ENCODE measurements at regions of chr10 and their contacts with region 1.

Region 1: DNA sequence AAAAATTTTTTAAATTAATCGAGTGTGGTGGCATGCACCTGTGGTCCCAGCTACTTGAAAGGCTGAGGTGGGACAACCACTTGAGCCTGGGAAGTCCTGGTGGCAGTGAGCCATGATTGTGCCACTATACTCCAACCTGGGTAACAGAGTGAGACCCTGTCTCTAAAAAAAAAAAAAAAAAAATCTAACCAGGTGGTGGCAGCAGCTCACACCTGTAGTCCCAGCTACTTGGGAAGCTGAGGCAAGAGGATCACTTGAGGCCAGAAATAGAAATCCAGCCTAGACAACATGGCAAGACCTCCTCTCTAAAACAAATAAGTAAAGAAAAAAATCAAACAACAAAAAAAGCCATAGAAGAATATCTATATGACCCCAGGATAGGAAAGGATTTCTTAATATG is 3.6 kb upstream of the MYOF start:
- DNase-seq: no peak
- H3K4me3 ChIP-seq: no peak overlapping the region
- H3K27ac ChIP-seq: no peak overlapping the region
- H3K4me1 ChIP-seq: peaks cover 11% of the 10 kb centered on the region in 2 donors
- H3K27me3 ChIP-seq: no peaks in the 10 kb centered on the region
- CTCF ChIP-seq: peak in 1 of 6 experiments; percentile 22
- POLR2A ChIP-seq: no peak

Region 2: DNA sequence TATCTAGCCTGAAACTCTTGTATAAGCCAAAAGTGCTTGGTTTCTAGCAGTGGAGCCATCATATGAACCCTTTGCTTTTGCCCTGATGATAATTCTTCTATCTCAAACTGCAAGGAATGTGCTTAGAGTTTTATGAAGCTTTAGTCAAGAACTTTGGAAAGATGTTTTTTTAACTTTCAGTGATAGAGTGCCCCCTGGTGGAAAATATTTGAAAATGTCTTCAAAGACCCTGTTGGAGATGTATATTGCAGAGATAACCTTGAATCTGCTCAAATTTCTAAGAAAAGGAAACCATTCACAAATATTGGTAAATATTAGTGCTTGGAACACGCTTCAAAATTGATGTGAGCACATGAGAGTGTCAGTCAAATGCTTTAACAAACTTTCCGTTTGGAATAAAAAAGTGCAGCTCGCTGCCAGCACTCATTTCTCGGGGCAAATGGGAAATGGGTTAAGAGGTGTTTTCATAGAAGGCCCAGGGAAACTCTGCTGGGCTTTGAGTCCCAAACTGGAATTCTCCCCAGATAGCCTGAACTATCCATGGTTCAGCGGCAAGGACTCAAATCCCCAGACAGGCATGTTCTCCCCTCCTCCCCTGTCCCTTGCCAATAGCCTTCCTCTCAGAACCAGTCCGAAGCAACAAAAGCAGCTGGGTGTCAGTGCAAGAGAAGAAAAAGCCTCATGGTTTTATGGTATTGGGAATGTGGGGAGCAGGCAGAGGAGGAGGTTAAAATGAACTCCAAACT is 132.9 kb before region 1 on chr10:
- intact Hi-C with region 1: no loop called
- DNase-seq: peak in 1 of 2 donors; percentile 12
- H3K4me3 ChIP-seq: no peak overlapping the region
- H3K27ac ChIP-seq: no peak overlapping the region
- H3K4me1 ChIP-seq: no peaks in the 10 kb centered on the region
- H3K27me3 ChIP-seq: no peaks in the 10 kb centered on the region
- CTCF ChIP-seq: peak; percentile 40 to 81 (median 62)
- POLR2A ChIP-seq: no peak

Region 3: DNA sequence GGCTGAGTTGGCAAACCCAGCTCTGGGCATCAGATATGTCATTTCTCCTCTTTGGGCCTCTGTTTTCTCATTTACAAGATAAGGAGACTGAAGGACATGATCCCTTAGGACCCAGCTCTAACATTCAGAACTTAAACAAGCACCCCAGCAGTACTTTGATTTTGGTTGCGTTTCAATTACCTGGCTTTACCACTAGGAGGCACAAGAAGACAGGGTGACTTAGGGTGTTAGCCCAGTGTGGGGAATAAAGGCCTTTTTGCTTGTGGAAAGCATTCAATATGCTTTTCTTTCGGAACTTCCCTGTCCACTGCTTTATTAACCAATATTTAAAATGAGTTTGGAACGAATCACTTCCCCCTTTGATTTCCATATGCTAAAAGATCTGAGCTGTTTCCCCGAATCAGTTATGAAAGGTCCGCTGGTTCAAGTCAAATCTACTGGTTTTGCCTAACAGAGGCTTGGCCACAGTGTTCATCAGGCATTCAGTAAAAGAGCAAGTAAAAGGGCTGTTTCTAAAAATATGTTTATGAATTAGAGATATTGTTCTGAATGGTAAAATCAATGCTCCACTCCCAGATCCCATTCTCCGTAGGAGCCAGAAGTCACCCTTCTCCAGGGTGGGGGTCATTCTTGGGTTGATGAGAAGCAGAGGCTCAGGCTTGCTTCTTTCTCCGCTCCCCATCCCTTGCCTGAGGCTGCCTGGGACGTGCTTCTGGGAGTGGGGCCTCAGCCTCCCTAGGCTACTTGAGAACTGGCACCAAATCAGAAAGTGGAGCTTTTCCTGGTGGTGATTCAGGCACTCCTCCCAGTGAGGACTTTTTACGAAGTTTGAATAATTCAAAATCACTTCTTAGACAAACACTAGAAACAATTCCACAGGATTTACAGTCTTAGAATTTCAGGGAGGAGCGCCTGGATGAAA is 109.1 kb before region 1 on chr10:
- intact Hi-C with region 1: loop called (anchors 2 kb)
- DNase-seq: peak; percentile 71 to 73
- H3K4me3 ChIP-seq: no peak overlapping the region
- H3K27ac ChIP-seq: peak overlapping the region; percentile 64 to 84 (median 79)
- H3K4me1 ChIP-seq: peaks cover 9 to 10% of the 10 kb centered on the region in 2 donors
- H3K27me3 ChIP-seq: no peaks in the 10 kb centered on the region
- CTCF ChIP-seq: peak; percentile 83 to 99 (median 92)
- POLR2A ChIP-seq: no peak

Region 4: GRCh38 chr10:93775356-93775755 is 289.7 kb after region 1 on chr10:
- intact Hi-C with region 1: no loop called
- DNase-seq: no peak
- H3K4me3 ChIP-seq: no peak overlapping the region
- H3K27ac ChIP-seq: no peak overlapping the region
- H3K4me1 ChIP-seq: no peaks in the 10 kb centered on the region
- H3K27me3 ChIP-seq: no peaks in the 10 kb centered on the region
- CTCF ChIP-seq: no peak
- POLR2A ChIP-seq: no peak

Measured in thyroid gland (tissue), 4 donors.